ENCODE measurements at regions of chr1 and their contacts with region 1.

Region 1: GRCh38 chr1:210373885-210374599 is 45.3 kb downstream of the HHAT start:
- DNase-seq: peak; percentile 90
- ATAC-seq: peak; percentile 82
- H3K4me3 Mint-ChIP-seq: no peak overlapping the region
- H3K27ac Mint-ChIP-seq: peak overlapping the region; percentile 82
- H3K4me1 Mint-ChIP-seq: peaks cover 27% of the 10 kb centered on the region
- H3K27me3 Mint-ChIP-seq: no peaks in the 10 kb centered on the region

Region 2: GRCh38 chr1:210222340-210223006 is 151.6 kb before region 1 on chr1:
- CTCF ChIA-PET with region 1: no interaction called
- POLR2A ChIA-PET with region 1: no interaction called
- intact Hi-C with region 1: no loop called
- DNase-seq: no peak
- ATAC-seq: no peak
- H3K4me3 Mint-ChIP-seq: no peak overlapping the region
- H3K27ac Mint-ChIP-seq: no peak overlapping the region
- H3K4me1 Mint-ChIP-seq: no peaks in the 10 kb centered on the region
- H3K27me3 Mint-ChIP-seq: peaks cover 24% of the 10 kb centered on the region

Region 3: GRCh38 chr1:210342986-210343780 is 30.9 kb before region 1 on chr1:
- CTCF ChIA-PET with region 1: interaction called, 28 read pairs
- POLR2A ChIA-PET with region 1: interaction called, 46 read pairs
- intact Hi-C with region 1: loop called (anchors 1 kb)
- DNase-seq: no peak
- ATAC-seq: peak; percentile 50
- H3K4me3 Mint-ChIP-seq: no peak overlapping the region
- H3K27ac Mint-ChIP-seq: no peak overlapping the region
- H3K4me1 Mint-ChIP-seq: peaks cover 37% of the 10 kb centered on the region
- H3K27me3 Mint-ChIP-seq: no peaks in the 10 kb centered on the region

Region 4: DNA sequence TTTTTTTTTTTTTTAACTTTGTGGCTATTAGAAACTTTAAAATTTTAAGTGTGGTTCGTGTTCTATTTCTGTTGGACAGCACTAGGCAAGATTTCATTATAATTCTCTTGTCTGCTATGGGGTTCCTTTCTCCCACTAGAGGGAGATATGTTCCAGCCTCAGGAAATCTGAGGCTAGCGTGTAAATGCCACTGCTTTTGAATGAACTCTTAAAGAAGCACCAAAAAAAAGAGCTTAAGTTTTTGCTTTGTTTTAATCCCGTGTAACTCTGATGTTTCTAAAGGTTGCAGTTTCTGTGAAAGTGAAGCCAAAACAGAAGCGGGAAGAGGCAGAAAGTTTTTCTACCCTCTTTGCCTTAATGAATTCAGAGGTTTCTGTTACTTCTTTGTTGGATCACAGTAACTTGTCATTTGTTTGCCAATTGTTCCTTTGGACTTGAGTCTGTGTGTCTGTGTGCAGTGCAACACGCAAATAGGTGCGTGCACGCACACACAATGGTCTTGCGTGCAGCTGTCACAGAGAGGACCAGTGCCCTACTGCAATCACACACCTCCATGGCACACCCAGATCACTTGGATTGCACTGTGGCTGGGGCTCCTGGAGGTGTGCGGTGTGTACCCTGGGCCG is 13.1 kb before region 1 on chr1:
- CTCF ChIA-PET with region 1: interaction called, 8 read pairs
- POLR2A ChIA-PET with region 1: interaction called, 22 read pairs
- intact Hi-C with region 1: no loop called
- DNase-seq: no peak
- ATAC-seq: peak; percentile 68
- H3K4me3 Mint-ChIP-seq: no peak overlapping the region
- H3K27ac Mint-ChIP-seq: no peak overlapping the region
- H3K4me1 Mint-ChIP-seq: peaks cover 7% of the 10 kb centered on the region
- H3K27me3 Mint-ChIP-seq: no peaks in the 10 kb centered on the region

Region 5: DNA sequence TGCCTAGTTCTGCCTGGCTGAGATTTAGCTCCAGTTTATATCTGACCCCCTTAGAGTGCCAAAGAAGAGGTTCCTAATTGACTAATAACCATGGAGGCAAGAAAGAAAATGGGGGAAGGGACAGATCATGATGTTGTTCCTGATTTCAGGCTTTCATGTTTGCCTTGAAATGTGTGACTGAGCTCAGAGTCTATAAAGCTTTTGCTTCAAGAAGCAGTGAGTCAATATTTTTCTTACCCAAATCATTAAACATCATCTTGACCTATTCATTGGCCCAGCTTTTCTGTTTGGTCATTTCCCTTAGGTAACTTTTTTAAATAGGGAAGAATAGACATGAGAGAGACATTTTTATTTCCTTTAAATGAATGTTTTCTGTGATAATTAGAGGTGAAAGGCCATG is 10.6 kb after region 1 on chr1:
- CTCF ChIA-PET with region 1: interaction called, 32 read pairs
- POLR2A ChIA-PET with region 1: no interaction called
- intact Hi-C with region 1: no loop called
- DNase-seq: no peak
- ATAC-seq: no peak
- H3K4me3 Mint-ChIP-seq: no peak overlapping the region
- H3K27ac Mint-ChIP-seq: no peak overlapping the region
- H3K4me1 Mint-ChIP-seq: no peaks in the 10 kb centered on the region
- H3K27me3 Mint-ChIP-seq: no peaks in the 10 kb centered on the region

Region 6: DNA sequence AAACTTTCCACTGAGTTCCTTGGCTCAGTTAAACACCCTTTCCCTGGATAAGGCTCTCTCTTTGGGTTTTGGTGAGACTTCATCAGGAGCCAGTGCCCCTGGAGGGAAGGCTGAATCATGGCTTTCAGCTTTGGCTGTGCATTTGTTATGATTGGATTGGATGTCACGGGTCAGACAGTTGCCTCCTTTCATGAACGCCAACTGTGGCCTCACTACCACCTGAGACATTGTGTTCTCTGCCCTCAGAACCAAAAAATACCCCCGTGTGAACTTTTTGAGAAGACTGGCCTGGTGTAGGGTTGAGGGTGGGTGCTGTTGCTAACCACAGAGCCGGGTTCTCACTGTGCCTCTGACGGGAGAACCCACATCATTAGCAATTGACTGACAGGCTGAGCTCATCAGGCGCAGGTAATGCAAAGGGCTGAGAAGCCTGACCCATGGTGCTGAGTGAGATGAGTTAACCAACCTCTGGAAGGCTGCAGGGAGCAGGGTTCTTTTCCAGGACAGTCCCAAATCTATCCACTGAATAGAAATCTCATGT is 20.3 kb after region 1 on chr1:
- CTCF ChIA-PET with region 1: interaction called, 44 read pairs
- POLR2A ChIA-PET with region 1: interaction called, 21 read pairs
- intact Hi-C with region 1: no loop called
- DNase-seq: no peak
- ATAC-seq: no peak
- H3K4me3 Mint-ChIP-seq: no peak overlapping the region
- H3K27ac Mint-ChIP-seq: no peak overlapping the region
- H3K4me1 Mint-ChIP-seq: peaks cover 32% of the 10 kb centered on the region
- H3K27me3 Mint-ChIP-seq: peaks cover 14% of the 10 kb centered on the region